Esophagus squamous epithelium (tissue), 5 donors: ENCODE measurements at regions of chr2 and their contacts with region 1.

Region 1: GRCh38 chr2:101151141-101151858 is at the start of gene TBC1D8:
- DNase-seq: peak; percentile 6
- H3K4me3 ChIP-seq: peak within 1 kb of the TSS; percentile 70 to 93 (median 88)
- H3K27ac ChIP-seq: peak within 1 kb of the TSS; percentile 88 to 92 (median 90)
- H3K4me1 ChIP-seq: peaks cover 14 to 52% (median 37%) of the 10 kb centered on the region in 3 donors
- H3K27me3 ChIP-seq: no peaks in the 10 kb centered on the region
- CTCF ChIP-seq: peak in 1 of 6 experiments; percentile 3
- POLR2A ChIP-seq: peak in 2 of 4 donors; percentile 69 to 88
- total RNA-seq, gene TBC1D8: 19.5 to 46.9 (median 24.8) TPM

Region 2: GRCh38 chr2:101011152-101011551 is 140.1 kb before region 1 on chr2:
- intact Hi-C with region 1: loop called (anchors 2 kb)
- DNase-seq: no peak
- H3K4me3 ChIP-seq: no peak overlapping the region
- H3K27ac ChIP-seq: no peak overlapping the region
- H3K4me1 ChIP-seq: peaks cover 0 to 13% (median 5%) of the 10 kb centered on the region in 3 donors
- H3K27me3 ChIP-seq: no peaks in the 10 kb centered on the region
- CTCF ChIP-seq: no peak
- POLR2A ChIP-seq: no peak

Region 3: GRCh38 chr2:101036562-101037457 is 114.5 kb before region 1 on chr2:
- intact Hi-C with region 1: loop called (anchors 5 kb)
- DNase-seq: no peak
- H3K4me3 ChIP-seq: no peak overlapping the region
- H3K27ac ChIP-seq: no peak overlapping the region
- H3K4me1 ChIP-seq: no peaks in the 10 kb centered on the region
- H3K27me3 ChIP-seq: no peaks in the 10 kb centered on the region
- CTCF ChIP-seq: peak; percentile 21 to 72 (median 54)
- POLR2A ChIP-seq: no peak

Region 4: DNA sequence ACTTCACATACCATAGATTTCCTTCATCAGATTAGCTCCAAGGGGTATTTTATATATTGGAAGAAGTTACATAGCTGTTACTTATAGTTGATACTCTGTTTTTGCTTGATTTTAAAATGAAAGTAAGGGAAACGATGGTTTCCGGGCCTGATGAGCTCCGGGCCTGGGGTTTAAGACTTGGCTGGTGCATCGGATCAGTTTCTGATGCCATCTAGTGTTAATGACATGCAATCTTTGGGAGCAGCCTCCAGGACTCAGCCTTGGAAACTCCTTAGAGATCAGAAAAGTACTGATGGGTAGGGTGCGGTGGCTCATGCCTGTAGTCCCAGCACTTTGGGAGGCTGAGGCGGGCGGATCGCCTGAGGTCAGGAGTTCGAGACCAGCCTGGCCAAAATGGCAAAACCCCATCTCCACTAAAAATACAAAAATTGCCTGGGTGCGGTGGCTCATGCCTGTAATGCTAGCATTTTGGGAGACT is 54.3 kb after region 1 on chr2:
- intact Hi-C with region 1: loop called (anchors 10 kb)
- DNase-seq: no peak
- H3K4me3 ChIP-seq: peak overlapping the region in 3 of 4 donors; percentile 13 to 51 (median 22)
- H3K27ac ChIP-seq: peak overlapping the region in 2 of 4 donors; percentile 26 to 30
- H3K4me1 ChIP-seq: peaks cover 0 to 17% (median 15%) of the 10 kb centered on the region in 3 donors
- H3K27me3 ChIP-seq: no peaks in the 10 kb centered on the region
- CTCF ChIP-seq: peak; percentile 26 to 74 (median 56)
- POLR2A ChIP-seq: no peak